Posterior vena cava (tissue), 2 donors: ENCODE measurements at regions of chr3 and their contacts with region 1.

Region 1: DNA sequence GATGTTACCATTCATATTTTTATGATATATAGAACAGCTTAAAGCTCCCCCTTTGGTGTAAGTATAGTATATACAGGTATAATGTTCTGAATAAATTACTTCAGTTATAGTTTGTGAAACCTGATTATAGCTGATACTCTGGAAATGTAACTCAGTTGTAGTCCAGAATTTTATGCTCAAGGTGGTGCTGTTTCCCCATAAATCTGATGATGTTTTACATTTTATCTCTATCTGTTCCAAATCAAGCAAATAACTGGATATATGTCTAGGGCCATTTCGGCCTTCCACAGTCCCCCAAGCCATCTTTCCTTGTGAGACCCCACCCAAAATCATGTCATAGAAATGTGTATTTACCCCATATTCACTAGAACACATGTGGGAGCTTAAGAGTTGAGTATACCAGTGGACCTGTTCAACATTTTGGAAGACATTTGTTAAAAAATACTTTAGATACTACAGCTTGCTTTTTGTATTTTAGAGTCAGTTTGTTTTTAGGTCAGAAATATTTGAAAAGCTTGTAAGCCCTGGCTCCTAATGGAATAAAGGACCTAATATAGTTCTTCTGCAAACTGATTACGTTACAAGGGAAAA is 107.1 kb downstream of the ATG7 start:
- DNase-seq: no peak

Region 2: DNA sequence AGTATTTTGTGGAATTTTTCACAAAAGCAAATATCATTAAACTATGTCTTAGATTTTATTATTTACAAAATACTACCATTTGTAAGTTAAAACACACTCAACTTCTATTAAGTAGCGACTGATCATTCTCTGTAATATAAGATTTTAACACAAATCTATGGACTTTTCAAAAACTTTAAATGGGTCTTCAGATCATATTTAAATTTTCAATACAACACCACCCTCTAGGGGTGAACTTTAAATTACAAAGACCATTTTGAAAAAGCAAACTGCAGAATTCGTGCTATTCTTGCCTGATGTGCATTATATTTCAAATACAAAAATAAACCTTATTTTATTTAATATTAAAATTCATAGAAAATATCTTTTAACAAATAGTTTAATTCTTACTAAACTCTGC is 272.6 kb after region 1 on chr3:
- intact Hi-C with region 1: loop called (anchors 5 kb)
- DNase-seq: no peak